Gastrocnemius medialis (tissue), 4 donors: ENCODE measurements at regions of chr5 and their contacts with region 1.

Region 1: DNA sequence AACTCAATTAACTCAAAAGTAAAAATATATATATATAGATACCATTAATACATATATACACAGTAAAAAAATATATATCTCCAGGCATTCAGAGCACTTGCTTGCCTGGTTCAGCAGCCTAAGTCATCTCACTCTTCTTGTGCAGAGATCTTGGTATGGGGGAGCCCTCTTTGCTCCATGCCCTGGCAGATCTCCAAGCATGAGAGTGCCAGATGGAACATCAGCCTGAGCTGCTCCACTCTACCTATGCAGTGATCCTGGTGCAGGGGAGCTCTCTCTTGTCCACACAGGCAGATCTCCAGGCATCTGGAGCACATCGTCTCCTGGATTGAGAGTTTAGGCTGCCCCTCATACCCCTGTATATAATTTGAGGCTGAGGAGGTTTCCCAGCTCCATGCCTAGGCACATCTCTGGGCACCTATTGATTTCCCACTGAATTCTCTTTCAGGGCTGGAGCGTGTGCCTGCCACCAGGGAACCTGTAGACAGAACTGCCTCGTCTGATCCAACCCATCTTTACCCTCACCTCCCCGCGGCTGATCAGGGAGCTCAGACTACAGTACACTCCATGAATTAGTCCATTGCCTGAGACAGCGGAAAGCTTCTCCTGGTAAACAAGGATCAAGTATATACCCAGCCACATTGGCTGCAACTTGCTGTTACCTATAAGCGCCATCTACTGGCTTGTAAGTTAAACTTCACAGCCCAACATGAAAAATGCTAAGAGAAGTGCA is 342.4 kb upstream of the GRIA1 start:
- DNase-seq: no peak
- ATAC-seq: no peak
- H3K4me3 ChIP-seq: no peak overlapping the region
- H3K27ac ChIP-seq: no peak overlapping the region
- H3K4me1 ChIP-seq: no peaks in the 10 kb centered on the region
- H3K27me3 ChIP-seq: no peaks in the 10 kb centered on the region
- CTCF ChIP-seq: peak in 1 of 5 experiments; percentile 22
- POLR2A ChIP-seq: no peak

Region 2: GRCh38 chr5:152560512-152561137 is 587.4 kb before region 1 on chr5:
- in situ Hi-C with region 1: loop called in 2 of 4 experiments (anchors 25 kb)
- intact Hi-C with region 1: loop called (anchors 10 kb)
- DNase-seq: no peak
- ATAC-seq: no peak
- H3K4me3 ChIP-seq: no peak overlapping the region
- H3K27ac ChIP-seq: no peak overlapping the region
- H3K4me1 ChIP-seq: no peaks in the 10 kb centered on the region
- H3K27me3 ChIP-seq: no peaks in the 10 kb centered on the region
- CTCF ChIP-seq: peak in 4 of 5 experiments; percentile 22 to 63 (median 39)
- POLR2A ChIP-seq: no peak

Region 3: GRCh38 chr5:152739916-152740315 is 408.1 kb before region 1 on chr5:
- in situ Hi-C with region 1: no loop called
- intact Hi-C with region 1: no loop called
- DNase-seq: no peak
- ATAC-seq: no peak
- H3K4me3 ChIP-seq: no peak overlapping the region
- H3K27ac ChIP-seq: no peak overlapping the region
- H3K4me1 ChIP-seq: no peaks in the 10 kb centered on the region
- H3K27me3 ChIP-seq: no peaks in the 10 kb centered on the region
- CTCF ChIP-seq: no peak
- POLR2A ChIP-seq: no peak